Activated naive CD4-positive, alpha-beta T cell treated with anti-CD3 and anti-CD28 coated beads for 36 hours (primary cell): ENCODE measurements at regions of chr4 and their contacts with region 1.

Region 1: DNA sequence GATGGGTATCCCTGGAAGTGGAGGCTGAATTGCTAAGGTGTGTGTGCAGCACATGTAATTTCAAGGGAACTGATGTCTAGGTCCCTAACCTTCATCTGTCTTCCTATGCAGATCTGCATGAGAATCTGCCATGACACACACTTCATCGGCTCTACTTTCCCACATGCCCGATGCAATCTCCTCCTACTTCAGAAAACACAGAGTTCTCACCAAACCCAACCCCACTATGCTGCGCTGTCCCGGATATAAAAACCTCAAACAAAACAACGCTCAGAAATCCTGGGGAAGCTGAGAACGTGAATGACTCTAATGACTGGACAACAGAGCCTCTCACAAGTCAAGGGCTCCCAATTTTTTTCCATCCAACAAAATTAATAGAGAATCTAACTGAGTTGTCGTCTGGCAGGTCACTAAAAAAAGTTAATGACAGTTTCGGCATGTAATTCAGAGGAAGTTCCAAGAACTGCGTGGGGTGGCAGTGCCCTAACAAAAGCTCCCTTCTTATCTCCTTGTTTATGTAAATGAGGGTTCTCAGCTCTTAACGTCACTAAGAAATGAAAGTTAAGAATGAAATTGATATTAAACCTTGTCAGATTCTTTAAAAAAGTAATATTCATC is 39.0 kb downstream of the STX18 start:
- DNase-seq: peak; percentile 37
- H3K4me3 Mint-ChIP-seq: peak overlapping the region; percentile 44
- H3K27ac Mint-ChIP-seq: peak overlapping the region; percentile 5
- H3K4me1 Mint-ChIP-seq: peaks cover 9% of the 10 kb centered on the region
- H3K27me3 Mint-ChIP-seq: no peaks in the 10 kb centered on the region

Region 2: DNA sequence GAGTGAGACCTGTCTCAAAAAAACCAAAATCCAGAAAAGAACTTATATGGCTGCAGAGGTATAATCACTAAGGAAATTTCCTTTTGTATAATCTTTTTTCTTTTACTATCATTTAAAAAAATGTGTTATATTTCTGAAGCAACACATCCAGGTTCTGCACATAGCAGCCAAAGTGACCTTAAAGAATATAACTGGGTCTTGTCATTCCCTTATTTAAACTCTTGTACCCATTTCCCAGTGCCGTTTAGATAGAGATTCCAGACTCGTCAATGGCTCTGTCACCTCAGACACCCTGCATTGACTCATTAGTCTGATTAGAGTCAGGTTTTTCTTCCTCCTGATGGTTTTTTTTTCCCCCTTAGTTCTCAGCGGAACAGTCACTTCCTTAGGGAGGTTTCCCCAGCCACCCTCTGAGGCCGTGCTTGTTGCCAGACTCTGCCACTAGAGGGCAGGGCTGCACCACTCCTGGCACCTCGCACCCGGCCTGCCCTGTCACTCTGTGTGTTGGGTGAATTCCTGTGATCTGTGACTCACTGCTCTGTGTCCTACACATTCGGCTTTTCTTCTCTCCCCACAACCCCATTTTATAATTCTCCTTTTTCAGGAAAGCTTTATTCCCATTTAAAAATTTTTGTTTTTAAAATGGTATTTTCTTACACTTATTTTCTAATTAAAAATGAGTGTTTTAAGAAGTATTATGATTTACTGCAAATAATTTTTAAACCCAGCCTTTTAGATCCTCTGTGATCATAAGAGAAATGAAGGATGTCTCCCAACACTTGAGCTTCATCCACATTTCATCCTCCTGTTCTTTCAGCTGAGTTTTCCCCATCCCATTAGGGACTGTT is 1396.2 kb before region 1 on chr4:
- CTCF ChIA-PET with region 1: no interaction called
- intact Hi-C with region 1: no loop called
- DNase-seq: peak; percentile 98
- H3K4me3 Mint-ChIP-seq: no peak overlapping the region
- H3K27ac Mint-ChIP-seq: peak overlapping the region; percentile 34
- H3K4me1 Mint-ChIP-seq: peaks cover 17% of the 10 kb centered on the region
- H3K27me3 Mint-ChIP-seq: no peaks in the 10 kb centered on the region

Region 3: DNA sequence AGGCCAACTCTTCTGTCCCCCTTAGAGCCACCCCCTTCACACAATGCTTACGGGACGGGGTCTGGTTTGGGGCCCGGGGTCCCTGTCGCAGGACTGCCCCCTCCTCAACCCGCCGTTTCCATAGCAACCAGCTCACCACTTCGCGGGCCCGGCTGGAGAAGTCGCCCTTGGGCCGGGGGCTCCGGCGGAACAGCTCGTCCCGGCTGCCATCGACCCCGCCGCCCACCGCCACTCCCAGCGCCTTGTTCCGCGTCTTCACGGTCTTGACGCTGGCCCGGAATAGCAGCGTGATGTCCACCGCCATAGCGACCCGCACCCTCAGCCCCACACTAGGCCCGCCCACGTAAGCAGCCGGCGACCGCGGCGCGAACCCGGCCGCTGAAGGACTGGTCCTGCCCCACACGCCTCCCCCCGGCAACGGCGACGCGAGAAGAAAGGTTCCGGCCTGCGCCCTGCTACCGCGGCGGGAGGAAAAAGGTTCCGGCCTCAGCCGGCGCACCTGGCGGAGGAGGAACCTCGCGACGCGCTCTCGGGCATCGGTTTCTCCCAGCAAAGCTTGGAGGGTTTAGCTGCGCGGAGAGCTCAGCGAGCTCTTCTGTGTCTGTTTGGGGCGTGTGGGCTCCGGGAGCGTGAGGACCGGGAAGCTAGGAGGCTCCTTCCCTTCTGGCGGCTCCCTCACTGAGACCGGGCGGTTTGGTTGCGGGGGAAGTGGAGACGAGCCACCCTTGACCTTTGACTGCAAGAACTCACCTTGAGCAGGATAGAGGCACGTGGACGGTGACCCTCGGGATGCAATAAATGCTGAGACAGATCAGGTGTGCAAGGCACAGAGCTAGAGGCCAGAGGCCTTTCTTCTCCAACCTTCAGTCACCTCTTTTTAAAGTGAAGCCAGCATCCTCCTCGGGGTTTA is 39.1 kb after region 1 on chr4 and contains the start of gene STX18:
- CTCF ChIA-PET with region 1: no interaction called
- intact Hi-C with region 1: loop called (anchors 5 kb)
- DNase-seq: peak; percentile 89
- H3K4me3 Mint-ChIP-seq: peak within 1 kb of the TSS; percentile 92
- H3K27ac Mint-ChIP-seq: peak within 1 kb of the TSS; percentile 87
- H3K4me1 Mint-ChIP-seq: peaks cover 43% of the 10 kb centered on the region
- H3K27me3 Mint-ChIP-seq: no peaks in the 10 kb centered on the region
- total RNA-seq, gene STX18: 18.3 to 19.0 TPM